Left cardiac atrium (tissue), 4 donors: ENCODE measurements at regions of chr7 and their contacts with region 1.

Region 1: DNA sequence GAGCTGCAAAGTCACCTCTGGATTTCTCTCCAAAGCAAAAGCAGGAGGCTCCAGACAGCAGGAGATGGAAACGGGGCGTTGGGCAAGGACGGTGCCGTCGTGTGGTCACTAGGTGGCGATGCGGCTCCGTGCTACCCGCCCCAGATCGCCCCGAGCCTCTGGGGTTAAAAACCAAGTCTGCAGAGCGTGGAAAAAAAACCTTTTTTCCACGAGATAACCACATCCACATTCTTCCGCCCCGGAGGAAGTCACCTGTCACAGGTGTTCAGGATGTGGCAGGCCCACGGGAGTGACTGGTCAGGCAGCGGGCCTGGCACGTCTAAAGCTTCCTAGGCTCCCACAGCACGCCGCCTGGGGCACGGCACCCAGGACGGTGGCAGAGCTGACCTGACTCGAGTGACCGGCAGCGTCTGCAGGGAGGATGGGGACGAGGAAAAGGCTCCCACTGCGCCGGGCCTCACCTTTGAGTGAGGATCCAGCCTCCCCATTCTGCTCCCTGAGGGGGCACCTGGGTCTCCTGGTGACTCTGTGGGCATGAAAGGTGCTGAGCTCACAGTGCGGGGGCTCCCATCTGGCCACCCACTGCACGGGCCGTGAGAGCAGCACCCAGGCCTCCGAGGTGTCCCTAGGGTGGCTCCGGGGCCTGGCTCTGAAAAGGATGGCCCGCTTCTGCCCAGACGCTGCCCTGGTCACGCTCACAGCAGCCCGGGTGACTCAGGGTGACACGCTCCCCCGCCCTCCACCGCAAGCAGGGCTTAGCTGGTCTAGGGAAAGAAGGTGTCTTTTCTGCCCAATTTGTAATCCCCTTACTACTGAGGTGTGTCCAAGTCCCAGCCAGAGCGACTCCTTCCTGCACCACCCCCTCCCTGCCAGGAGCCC is 71.3 kb upstream of the TNRC18 start:
- DNase-seq: peak; percentile 82
- ATAC-seq: peak; percentile 77 to 82

Region 2: GRCh38 chr7:5382281-5382892 is 112.5 kb before region 1 on chr7:
- intact Hi-C with region 1: no loop called
- DNase-seq: peak; percentile 52
- ATAC-seq: peak; percentile 13 to 48

Region 3: GRCh38 chr7:5557920-5558401 is 63.0 kb after region 1 on chr7:
- intact Hi-C with region 1: loop called in 1 of 2 experiments (anchors 1 kb)
- DNase-seq: peak; percentile 67
- ATAC-seq: peak; percentile 20 to 36

Region 4: DNA sequence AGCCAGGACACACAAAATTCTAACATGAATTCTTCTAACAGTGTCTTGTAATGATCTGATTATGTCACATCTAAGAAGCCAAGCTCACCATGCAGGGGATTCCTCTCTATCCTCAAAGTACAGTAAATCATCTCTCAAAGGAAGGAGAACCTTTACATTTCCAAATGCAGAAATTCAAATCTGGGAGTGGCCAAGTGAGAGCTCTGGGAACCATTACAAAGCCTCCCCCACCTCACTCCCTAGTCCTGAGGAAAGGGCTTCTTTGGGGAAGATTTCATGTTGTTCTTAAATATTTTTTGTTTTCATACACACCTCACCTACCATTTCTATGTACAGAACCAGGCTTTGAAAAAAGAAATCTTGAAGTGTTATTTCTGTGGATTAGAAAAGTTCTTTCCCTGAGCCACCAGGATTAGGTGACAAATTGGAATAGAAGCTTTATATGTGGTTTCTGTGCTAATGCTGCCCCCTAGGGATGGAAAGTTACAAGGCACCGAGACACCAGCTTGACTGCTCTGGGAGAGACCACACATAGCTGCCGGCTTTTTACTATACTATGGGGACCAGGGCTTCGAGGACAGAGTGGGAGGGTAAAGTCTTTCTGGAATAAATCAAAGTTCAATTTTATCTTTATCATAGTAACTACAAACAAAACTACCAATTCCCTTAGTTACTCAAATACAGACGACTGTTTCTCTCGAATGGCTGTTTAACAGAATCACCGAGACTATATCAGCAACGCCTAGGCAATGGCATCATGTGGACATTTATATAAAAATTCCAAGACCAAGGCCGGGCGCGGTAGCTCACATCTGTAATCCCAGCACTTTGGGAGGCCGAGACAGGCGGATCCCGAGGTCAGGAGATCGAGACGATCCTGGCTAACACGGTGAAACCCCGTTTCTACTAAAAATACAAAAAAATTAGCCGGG is 170.4 kb after region 1 on chr7:
- intact Hi-C with region 1: loop called in 1 of 2 experiments (anchors 10 kb)
- DNase-seq: peak; percentile 64
- ATAC-seq: peak; percentile 73 to 83

Region 5: DNA sequence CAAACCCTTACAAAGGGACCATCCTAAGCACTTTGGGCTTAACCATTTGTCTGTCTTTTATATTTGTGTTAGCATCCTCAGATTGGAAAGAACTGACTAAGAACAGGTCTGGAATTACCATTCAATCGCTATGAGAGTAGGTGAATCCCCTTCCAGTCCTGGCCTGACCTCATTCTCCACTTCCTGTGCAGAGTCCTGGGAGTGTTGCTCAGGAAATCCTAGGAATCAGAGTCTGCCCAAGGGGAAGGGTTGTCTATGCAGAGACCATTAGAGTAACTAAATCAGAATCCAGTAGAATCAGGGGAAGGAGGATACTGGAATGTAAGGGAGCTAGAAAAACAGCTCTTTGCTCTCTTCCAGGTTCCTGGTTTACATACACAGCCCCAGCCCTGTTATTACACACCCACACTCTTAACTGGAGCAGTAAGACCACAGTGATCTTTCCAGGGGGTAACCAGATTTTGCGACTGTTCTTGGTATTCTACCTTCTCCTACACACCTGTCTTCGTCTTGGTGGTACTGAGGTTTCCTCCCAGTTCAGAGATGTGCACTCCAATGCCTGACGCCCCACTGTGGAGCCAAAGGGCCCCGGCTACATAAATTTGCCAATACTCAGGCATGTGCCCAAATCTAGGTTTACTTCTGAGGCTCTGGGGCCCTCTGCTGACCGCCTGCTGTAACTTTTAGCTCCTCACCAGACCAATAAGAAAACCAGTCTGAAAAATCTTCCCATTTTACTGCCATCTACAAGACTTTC is 182.8 kb after region 1 on chr7:
- intact Hi-C with region 1: loop called in 1 of 2 experiments (anchors 5 kb)
- DNase-seq: peak; percentile 72
- ATAC-seq: peak; percentile 65 to 81

Region 6: GRCh38 chr7:5704534-5704922 is 209.6 kb after region 1 on chr7:
- intact Hi-C with region 1: loop called (anchors 5 to 10 kb)
- DNase-seq: peak; percentile 80
- ATAC-seq: peak; percentile 75 to 80